PC-9 (cell line): ENCODE measurements at regions of chr2 and their contacts with region 1.

Region 1: GRCh38 chr2:135586148-135586547 is 54.9 kb downstream of the R3HDM1 start:
- DNase-seq: no peak
- H3K4me3 ChIP-seq: no peak overlapping the region
- H3K27ac ChIP-seq: no peak overlapping the region
- H3K4me1 ChIP-seq: no peaks in the 10 kb centered on the region
- H3K27me3 ChIP-seq: no peaks in the 10 kb centered on the region
- CTCF ChIP-seq: no peak

Region 2: GRCh38 chr2:135563793-135564192 is 22.4 kb before region 1 on chr2:
- CTCF ChIA-PET with region 1: no interaction called
- POLR2A ChIA-PET with region 1: no interaction called
- intact Hi-C with region 1: loop called (anchors 2 kb)
- DNase-seq: no peak
- H3K4me3 ChIP-seq: no peak overlapping the region
- H3K27ac ChIP-seq: no peak overlapping the region
- H3K4me1 ChIP-seq: no peaks in the 10 kb centered on the region
- H3K27me3 ChIP-seq: no peaks in the 10 kb centered on the region
- CTCF ChIP-seq: no peak

Region 3: GRCh38 chr2:135709992-135710391 is 123.8 kb after region 1 on chr2:
- CTCF ChIA-PET with region 1: no interaction called
- POLR2A ChIA-PET with region 1: no interaction called
- intact Hi-C with region 1: no loop called
- DNase-seq: peak in 1 of 2 experiments; percentile 53
- H3K4me3 ChIP-seq: no peak overlapping the region
- H3K27ac ChIP-seq: no peak overlapping the region
- H3K4me1 ChIP-seq: no peaks in the 10 kb centered on the region
- H3K27me3 ChIP-seq: no peaks in the 10 kb centered on the region
- CTCF ChIP-seq: peak; percentile 96

Region 4: DNA sequence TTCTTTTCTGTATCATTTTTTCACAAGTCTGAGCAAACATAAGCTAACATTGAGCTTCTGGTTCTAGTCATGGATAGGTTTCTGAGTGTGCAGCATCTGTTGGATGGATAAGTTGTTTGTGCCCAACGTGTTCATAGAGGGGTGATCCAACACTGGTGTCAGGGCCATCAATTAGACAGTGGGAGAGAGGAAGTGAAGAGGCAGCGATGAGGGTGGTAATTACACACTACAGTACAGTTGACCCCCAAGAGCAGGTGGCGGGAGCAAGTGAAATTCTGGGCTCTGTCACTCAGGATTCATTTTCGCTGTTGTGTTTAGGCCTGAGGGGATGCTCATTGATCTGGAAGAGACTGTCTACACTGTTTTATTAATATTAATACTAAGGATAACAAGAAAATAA is 711.8 kb after region 1 on chr2:
- CTCF ChIA-PET with region 1: no interaction called
- POLR2A ChIA-PET with region 1: no interaction called
- intact Hi-C with region 1: no loop called
- DNase-seq: no peak
- H3K4me3 ChIP-seq: no peak overlapping the region
- H3K27ac ChIP-seq: no peak overlapping the region
- H3K4me1 ChIP-seq: no peaks in the 10 kb centered on the region
- H3K27me3 ChIP-seq: no peaks in the 10 kb centered on the region
- CTCF ChIP-seq: no peak